Calu3 (cell line): ENCODE measurements at regions of chr15 and their contacts with region 1.

Region 1: GRCh38 chr15:58770857-58771620 is at the start of gene MINDY2:
- DNase-seq: peak; percentile 99
- H3K4me3 Mint-ChIP-seq: no peak within 1 kb of the TSS
- H3K27ac Mint-ChIP-seq: no peak within 1 kb of the TSS
- H3K4me1 Mint-ChIP-seq: no peaks in the 10 kb centered on the region
- H3K27me3 Mint-ChIP-seq: no peaks in the 10 kb centered on the region
- CTCF ChIP-seq: peak; percentile 53
- total RNA-seq, gene MINDY2: 46.2 and 59.0 TPM in 2 replicates

Region 2: DNA sequence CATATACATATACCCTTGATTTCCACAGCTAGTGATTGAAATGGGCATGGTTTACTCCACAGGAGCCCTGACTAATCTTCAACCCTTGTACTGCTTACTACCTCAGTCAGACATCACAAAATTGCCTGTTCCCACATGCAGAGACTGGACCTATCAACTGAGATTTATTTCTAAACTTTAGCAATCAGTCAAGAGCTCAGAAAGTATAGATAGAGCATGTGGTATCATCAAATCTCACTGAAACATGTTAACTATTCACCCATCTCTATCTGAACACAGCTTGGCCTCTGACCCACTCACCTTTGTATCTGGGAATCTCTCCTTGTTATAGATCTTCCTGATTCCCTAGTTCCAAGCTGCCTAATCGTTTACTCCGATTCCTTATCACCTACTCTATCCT is 36.2 kb before region 1 on chr15:
- CTCF ChIA-PET with region 1: no interaction called
- intact Hi-C with region 1: no loop called
- DNase-seq: no peak
- H3K4me3 Mint-ChIP-seq: peak overlapping the region; percentile 4
- H3K27ac Mint-ChIP-seq: peak overlapping the region; percentile 42
- H3K4me1 Mint-ChIP-seq: peaks cover 83% of the 10 kb centered on the region
- H3K27me3 Mint-ChIP-seq: no peaks in the 10 kb centered on the region
- CTCF ChIP-seq: no peak

Region 3: DNA sequence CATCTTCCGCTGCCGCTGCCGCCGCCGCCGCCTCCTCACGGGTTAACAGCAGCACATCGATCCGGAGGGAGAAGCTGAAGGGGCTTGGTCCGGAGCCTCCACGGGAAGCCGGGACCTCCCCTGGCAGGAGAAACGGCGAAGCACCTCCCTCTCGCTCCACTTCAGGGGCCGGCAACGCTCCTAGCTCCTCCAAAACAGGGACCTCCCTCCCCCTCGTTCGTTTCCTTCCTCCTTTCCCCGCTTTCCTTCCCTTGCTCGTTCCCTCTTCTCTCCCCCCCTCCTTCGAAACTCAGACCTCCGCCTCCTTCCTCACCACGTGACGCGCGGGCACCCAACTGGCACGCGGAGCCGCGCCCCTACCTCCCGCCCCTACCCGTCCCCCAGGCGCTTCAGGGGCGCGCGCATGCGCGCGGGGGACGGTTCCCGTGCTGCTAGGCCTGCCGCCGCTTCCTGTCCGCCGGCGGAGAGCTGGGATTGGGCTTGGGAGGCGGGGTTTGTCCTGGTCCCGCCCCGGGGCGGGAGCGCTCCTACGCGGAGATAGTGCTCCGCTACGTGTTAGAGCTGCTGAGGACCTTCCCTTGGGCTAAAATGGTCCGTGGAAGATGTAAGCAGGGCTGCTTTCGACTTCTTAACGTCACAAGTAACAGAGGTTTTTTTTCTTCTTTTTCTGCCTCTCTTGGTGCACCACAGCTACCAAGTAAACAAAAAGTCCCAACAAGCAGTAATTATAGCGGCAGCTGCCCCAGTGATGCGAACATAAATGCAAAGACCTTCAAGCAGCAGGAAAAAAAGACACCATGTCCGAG is 21.3 kb before region 1 on chr15 and contains the start of gene ADAM10:
- CTCF ChIA-PET with region 1: interaction called, 17 read pairs
- intact Hi-C with region 1: no loop called
- DNase-seq: peak; percentile 99
- H3K4me3 Mint-ChIP-seq: peak within 1 kb of the TSS; percentile 88
- H3K27ac Mint-ChIP-seq: peak within 1 kb of the TSS; percentile 87
- H3K4me1 Mint-ChIP-seq: peaks cover 5% of the 10 kb centered on the region
- H3K27me3 Mint-ChIP-seq: no peaks in the 10 kb centered on the region
- CTCF ChIP-seq: no peak
- total RNA-seq, gene ADAM10: 407 and 474 TPM in 2 replicates

Region 4: GRCh38 chr15:58758138-58758537 is 12.9 kb before region 1 on chr15:
- CTCF ChIA-PET with region 1: interaction called, 12 read pairs
- intact Hi-C with region 1: no loop called
- DNase-seq: peak; percentile 33
- H3K4me3 Mint-ChIP-seq: no peak overlapping the region
- H3K27ac Mint-ChIP-seq: no peak overlapping the region
- H3K4me1 Mint-ChIP-seq: peaks cover 12% of the 10 kb centered on the region
- H3K27me3 Mint-ChIP-seq: no peaks in the 10 kb centered on the region
- CTCF ChIP-seq: no peak

Region 5: DNA sequence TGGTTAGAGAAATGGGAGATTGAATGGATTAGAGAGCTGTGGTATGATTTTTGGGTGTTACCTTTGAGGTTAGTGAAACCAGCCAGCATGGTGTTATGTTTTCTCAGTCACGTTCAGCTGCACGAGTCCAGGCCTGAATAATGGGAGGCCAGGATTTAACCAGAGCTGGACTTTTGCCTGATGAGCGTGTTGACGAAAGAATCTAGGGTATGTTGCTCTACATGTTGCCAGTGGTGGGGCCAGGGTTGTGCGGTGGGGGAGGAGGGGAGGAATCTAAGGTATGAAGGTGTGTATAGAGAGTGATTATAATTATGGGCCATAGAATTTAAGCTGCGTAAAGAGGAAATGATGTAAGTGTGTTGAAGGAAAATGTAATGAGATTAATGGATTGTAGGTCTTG is 22.8 kb after region 1 on chr15:
- CTCF ChIA-PET with region 1: interaction called, 13 read pairs
- intact Hi-C with region 1: no loop called
- DNase-seq: peak; percentile 92
- H3K4me3 Mint-ChIP-seq: peak overlapping the region; percentile 61
- H3K27ac Mint-ChIP-seq: peak overlapping the region; percentile 97
- H3K4me1 Mint-ChIP-seq: peaks cover 57% of the 10 kb centered on the region
- H3K27me3 Mint-ChIP-seq: no peaks in the 10 kb centered on the region
- CTCF ChIP-seq: no peak

Region 6: GRCh38 chr15:58852347-58852746 is 81.3 kb after region 1 on chr15:
- CTCF ChIA-PET with region 1: interaction called, 15 read pairs
- intact Hi-C with region 1: loop called (anchors 5 kb)
- DNase-seq: no peak
- H3K4me3 Mint-ChIP-seq: no peak overlapping the region
- H3K27ac Mint-ChIP-seq: peak overlapping the region; percentile 28
- H3K4me1 Mint-ChIP-seq: peaks cover 19% of the 10 kb centered on the region
- H3K27me3 Mint-ChIP-seq: no peaks in the 10 kb centered on the region
- CTCF ChIP-seq: no peak

Region 7: GRCh38 chr15:58864602-58865424 is 93.8 kb after region 1 on chr15:
- CTCF ChIA-PET with region 1: interaction called, 8 read pairs
- intact Hi-C with region 1: loop called (anchors 5 kb)
- DNase-seq: peak; percentile 81
- H3K4me3 Mint-ChIP-seq: peak overlapping the region; percentile 72
- H3K27ac Mint-ChIP-seq: peak overlapping the region; percentile 93
- H3K4me1 Mint-ChIP-seq: peaks cover 41% of the 10 kb centered on the region
- H3K27me3 Mint-ChIP-seq: no peaks in the 10 kb centered on the region
- CTCF ChIP-seq: no peak

Region 8: DNA sequence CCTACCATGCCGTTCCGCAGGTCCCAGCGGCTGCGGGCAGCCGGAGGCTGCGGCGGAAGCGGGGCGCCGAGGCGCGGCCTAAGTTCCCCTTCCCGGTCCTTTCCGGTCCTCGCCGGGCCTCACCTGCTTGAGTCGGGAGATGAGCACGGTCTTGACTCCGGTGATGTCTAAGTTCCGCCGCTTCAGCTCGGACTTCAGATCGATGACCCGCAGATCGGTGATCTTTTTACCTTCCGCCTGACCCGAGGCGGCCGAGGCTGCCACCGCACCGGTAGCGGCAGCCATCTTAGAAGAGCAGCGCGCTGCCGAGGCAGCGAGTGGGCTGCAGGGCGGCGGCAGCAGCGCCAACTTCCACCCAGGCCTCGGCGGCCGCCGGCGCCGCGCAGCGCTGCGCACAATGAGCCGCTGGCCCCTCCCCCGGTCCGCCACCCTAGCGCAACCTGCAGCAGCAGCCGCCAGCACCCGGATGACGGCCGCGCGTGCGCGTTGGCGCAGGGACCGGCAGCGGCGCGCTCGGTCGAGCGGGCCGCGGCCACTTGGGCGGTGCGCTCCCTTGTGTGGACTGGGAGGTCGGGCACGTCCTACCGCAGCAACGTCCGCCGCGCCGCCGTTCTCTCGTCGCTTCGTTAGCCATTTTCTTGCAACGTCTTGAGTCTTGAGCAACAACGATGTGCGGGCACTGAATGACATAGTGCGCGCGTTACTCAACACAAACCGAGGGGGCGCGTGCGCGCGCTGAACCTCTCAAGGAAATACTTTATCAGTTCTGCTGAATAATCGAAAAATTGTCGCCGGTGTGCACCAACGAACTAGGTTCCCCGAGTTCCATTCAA is 162.5 kb after region 1 on chr15 and contains the start of gene SLTM:
- CTCF ChIA-PET with region 1: no interaction called
- intact Hi-C with region 1: loop called (anchors 5 kb)
- DNase-seq: peak; percentile 97
- H3K4me3 Mint-ChIP-seq: peak within 1 kb of the TSS; percentile 96
- H3K27ac Mint-ChIP-seq: peak within 1 kb of the TSS; percentile 99
- H3K4me1 Mint-ChIP-seq: peaks cover 8% of the 10 kb centered on the region
- H3K27me3 Mint-ChIP-seq: no peaks in the 10 kb centered on the region
- CTCF ChIP-seq: peak; percentile 44
- total RNA-seq, gene SLTM: 131 and 135 TPM in 2 replicates